Tibial artery (tissue), 4 donors: ENCODE measurements at regions of chr13 and their contacts with region 1.

Region 1: GRCh38 chr13:97109841-97110492 is 112.2 kb upstream of the MBNL2 start:
- DNase-seq: peak; percentile 93 to 96
- H3K4me3 ChIP-seq: peak overlapping the region; percentile 9 to 25
- H3K27ac ChIP-seq: peak overlapping the region; percentile 64 to 70
- H3K4me1 ChIP-seq: peaks cover 9 to 91% (median 45%) of the 10 kb centered on the region in 4 donors
- H3K27me3 ChIP-seq: no peaks in the 10 kb centered on the region
- CTCF ChIP-seq: peak; percentile 96

Region 2: DNA sequence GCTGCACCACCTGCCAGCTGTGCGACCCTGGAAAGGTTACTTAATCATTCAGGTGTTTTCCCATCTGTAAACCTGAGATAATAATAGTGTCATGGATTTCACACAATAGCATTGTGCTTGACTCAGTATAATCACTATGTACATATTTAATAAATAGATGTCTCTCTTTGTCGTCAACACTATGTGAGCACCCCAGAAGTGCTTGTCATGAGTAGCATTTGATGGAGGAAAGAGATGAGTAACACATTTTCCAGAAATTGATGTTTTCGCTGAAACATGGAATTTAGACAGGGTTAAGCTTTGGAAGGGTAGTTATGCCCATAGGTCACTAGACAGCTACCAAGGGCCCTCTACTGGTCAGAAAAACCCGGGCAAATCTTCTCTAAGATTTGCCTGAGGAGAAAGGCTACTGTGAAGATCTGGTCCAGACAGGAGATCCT is 102.7 kb after region 1 on chr13:
- intact Hi-C with region 1: loop called (anchors 2 kb)
- DNase-seq: no peak
- H3K4me3 ChIP-seq: no peak overlapping the region
- H3K27ac ChIP-seq: no peak overlapping the region
- H3K4me1 ChIP-seq: no peaks in the 10 kb centered on the region
- H3K27me3 ChIP-seq: no peaks in the 10 kb centered on the region
- CTCF ChIP-seq: peak; percentile 32 to 43

Region 3: DNA sequence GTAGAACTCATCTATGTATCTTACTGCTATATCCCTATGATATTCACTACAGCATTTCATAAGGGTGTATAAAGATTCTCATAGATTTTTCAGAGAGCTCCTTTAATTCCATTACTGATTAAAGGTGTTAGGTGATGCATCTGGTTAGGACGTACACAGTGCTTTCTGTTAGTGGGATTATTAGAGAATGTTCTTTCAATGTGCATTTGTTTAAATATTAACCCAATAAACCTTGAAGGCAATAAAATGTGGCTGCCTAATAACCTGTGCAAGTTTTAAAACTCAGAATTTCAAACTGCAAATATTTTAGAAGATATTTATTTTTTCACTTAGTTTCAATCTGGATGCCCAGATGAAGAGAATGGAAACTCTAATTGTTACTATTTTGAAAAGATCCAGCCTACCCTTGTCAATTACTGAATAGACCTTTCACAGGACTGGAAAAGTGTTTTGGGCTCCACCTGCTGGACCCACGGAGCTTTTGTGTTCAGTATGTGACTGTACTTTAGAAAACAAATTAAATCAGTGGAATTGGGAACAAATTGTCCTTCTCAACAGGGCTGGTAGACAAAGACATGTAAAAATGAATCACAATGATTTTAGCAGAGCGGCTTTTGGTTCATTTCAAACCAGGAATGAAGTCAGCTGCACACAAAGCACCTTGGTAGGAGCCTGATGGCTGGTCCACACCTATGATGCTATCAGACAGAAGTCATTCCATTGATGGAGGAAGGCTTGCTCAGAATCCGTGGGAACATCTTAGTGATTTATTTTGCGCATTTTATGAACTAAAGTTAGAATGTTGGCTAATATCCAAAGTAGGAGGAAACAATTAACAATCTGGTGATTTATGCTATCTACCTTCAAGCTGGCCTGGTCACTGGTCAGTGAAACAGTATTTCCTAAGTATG is 234.6 kb after region 1 on chr13:
- intact Hi-C with region 1: loop called (anchors 5 kb)
- DNase-seq: peak in 1 of 2 donors; percentile 63
- H3K4me3 ChIP-seq: no peak overlapping the region
- H3K27ac ChIP-seq: no peak overlapping the region
- H3K4me1 ChIP-seq: peaks cover 0 to 29% (median 19%) of the 10 kb centered on the region in 4 donors
- H3K27me3 ChIP-seq: no peaks in the 10 kb centered on the region
- CTCF ChIP-seq: peak; percentile 56 to 73

Region 4: GRCh38 chr13:97359181-97360057 is 249.5 kb after region 1 on chr13:
- intact Hi-C with region 1: loop called (anchors 5 kb)
- DNase-seq: peak in 1 of 2 donors; percentile 48
- H3K4me3 ChIP-seq: no peak overlapping the region
- H3K27ac ChIP-seq: peak overlapping the region in 1 of 2 donors; percentile 10
- H3K4me1 ChIP-seq: peaks cover 0 to 27% (median 2%) of the 10 kb centered on the region in 4 donors
- H3K27me3 ChIP-seq: no peaks in the 10 kb centered on the region
- CTCF ChIP-seq: peak; percentile 82 to 84

Region 5: GRCh38 chr13:97802213-97802612 is 692.2 kb after region 1 on chr13:
- intact Hi-C with region 1: loop called (anchors 5 kb)
- DNase-seq: no peak
- H3K4me3 ChIP-seq: no peak overlapping the region
- H3K27ac ChIP-seq: no peak overlapping the region
- H3K4me1 ChIP-seq: no peaks in the 10 kb centered on the region
- H3K27me3 ChIP-seq: no peaks in the 10 kb centered on the region
- CTCF ChIP-seq: no peak